Psoas muscle (tissue), 8 donors: ENCODE measurements at regions of chr1 and their contacts with region 1.

Region 1: DNA sequence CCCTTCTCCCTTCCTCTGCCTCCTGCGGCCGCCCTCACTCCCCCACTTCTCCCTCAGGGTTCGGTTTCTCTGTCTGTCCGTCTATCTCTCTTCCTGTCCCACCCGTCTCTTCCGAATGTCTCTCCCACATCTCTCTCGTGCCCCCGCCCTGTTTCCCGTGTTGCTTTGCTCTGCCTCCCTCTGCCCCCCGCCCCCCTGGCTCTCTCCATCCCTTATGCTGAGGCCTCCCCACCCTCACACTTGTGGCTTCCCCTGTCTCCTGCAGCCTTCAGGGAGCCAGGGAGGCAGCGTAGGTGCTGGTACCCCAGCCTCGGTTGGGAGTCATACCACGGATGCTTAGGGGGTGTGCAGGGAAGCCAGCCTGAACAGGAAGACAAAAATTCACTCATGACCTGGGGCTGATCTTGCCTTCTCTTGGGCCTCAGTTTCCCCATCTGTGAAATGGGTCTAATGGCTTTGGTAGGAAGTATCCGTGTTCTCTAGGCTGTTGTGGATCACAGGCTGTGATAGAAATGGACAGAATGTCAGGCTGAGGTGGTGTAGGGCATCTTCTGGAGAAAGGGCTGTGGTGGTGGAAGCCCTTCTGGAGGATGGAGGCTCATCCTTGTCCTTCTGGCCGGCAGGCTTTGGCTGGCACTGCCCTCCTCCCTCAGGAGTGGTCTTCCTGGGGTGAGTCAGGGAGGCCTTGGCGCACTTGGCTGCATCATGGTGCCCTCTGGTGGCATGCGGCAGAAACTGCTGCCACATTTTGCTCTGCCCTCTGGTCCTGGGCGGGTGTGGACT is 55.5 kb downstream of the FOXO6 start:
- DNase-seq: peak; percentile 65 to 86
- ATAC-seq: peak; percentile 51 to 70 (median 58)
- H3K4me3 ChIP-seq: no peak overlapping the region
- H3K27ac ChIP-seq: no peak overlapping the region
- H3K4me1 ChIP-seq: peaks cover 36% of the 10 kb centered on the region
- H3K27me3 ChIP-seq: no peaks in the 10 kb centered on the region
- CTCF ChIP-seq: peak; percentile 94

Region 2: GRCh38 chr1:41268154-41268770 is 148.5 kb before region 1 on chr1:
- intact Hi-C with region 1: loop called (anchors 5 kb)
- DNase-seq: peak; percentile 75 to 85
- ATAC-seq: peak; percentile 90 to 96 (median 94)
- H3K4me3 ChIP-seq: no peak overlapping the region
- H3K27ac ChIP-seq: no peak overlapping the region
- H3K4me1 ChIP-seq: peaks cover 3% of the 10 kb centered on the region
- H3K27me3 ChIP-seq: no peaks in the 10 kb centered on the region
- CTCF ChIP-seq: peak; percentile 99

Region 3: GRCh38 chr1:41282679-41283317 is 133.9 kb before region 1 on chr1:
- intact Hi-C with region 1: loop called in 1 of 2 experiments (anchors 5 kb)
- DNase-seq: peak; percentile 24 to 65
- ATAC-seq: peak; percentile 69 to 85 (median 82)
- H3K4me3 ChIP-seq: no peak overlapping the region
- H3K27ac ChIP-seq: no peak overlapping the region
- H3K4me1 ChIP-seq: no peaks in the 10 kb centered on the region
- H3K27me3 ChIP-seq: no peaks in the 10 kb centered on the region
- CTCF ChIP-seq: peak; percentile 73

Region 4: DNA sequence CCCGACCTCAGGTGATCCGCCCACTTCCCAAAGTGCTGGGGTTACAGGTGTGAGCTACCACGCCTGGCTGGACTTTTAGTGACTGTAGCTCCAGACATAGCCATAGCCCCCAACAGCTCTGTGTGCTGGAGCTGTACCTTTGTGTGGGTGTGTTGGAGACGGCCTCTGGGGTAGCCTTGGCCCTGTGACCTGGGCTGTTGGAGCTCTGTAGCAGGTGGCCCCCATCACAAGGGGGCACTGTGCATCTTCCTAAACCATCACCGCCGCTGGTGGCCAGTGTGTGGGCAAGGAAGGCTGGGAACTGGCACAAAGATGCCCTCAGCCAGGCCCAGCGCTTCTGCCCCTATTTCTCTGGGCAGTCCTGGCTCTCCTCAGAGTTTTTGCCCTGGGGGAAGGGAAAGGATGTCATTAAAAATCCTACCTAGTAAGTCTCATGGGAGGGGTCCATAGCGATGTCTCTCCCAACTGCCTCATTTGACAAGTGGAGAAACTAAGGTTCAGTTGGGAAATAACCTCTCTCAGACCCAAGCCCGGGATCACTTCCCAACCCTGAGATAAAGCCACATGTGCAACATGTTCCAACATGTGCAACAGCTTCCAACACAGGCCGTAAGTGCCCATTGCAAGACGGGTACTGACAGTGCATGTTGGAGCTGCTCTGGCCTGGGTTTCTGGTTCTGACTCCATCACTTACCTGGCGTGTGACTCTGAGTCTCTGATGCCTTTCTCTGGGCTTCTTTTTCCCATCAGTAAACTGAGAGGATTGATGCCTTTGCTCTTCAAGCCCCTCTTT is 93.7 kb before region 1 on chr1:
- intact Hi-C with region 1: loop called (anchors 1 to 2 kb)
- DNase-seq: peak; percentile 60 to 83
- ATAC-seq: peak; percentile 86 to 94 (median 90)
- H3K4me3 ChIP-seq: no peak overlapping the region
- H3K27ac ChIP-seq: no peak overlapping the region
- H3K4me1 ChIP-seq: peaks cover 24% of the 10 kb centered on the region
- H3K27me3 ChIP-seq: no peaks in the 10 kb centered on the region
- CTCF ChIP-seq: peak; percentile 63

Region 5: DNA sequence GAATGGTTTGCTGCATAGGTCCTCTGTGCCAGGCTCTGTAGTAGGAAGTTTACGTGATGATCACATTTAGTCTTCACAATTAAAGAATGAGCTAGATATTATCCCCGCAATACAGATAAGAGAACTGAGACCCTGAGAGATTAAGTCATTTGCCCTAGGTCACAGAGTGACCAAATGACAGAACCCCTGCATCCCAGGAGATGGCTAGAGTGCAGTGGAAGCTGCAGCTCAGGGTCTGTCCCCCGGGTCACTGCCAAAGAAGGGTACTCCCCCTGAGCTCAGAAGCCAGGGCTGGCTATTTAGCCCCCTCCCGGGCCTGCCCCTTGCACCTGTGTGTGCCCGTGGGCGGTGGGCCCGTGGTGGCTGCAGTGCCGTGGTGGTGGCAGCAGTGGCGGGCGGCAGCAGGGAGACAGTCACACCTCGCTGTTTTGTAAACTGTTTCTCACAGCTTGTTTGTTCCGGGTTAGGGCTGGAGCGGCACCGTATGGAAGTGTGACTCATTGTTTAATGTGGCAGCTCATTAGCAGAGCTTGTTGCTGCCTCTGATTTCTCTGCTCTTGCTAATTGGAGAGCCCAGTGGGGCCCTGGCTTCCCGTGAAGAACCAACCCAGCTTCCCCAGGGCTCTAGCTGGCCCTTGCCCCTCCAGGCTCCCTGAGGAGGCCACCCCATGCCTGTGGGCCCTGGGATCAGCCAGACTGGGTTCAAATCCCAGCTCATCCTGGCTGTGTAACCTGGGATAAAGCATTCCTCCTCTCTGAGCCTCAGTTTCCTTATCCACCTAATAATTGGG is 74.8 kb before region 1 on chr1:
- intact Hi-C with region 1: loop called in 1 of 2 experiments (anchors 5 kb)
- DNase-seq: no peak
- ATAC-seq: peak; percentile 36 to 82 (median 75)
- H3K4me3 ChIP-seq: peak overlapping the region; percentile 20
- H3K27ac ChIP-seq: peak overlapping the region; percentile 90
- H3K4me1 ChIP-seq: peaks cover 44% of the 10 kb centered on the region
- H3K27me3 ChIP-seq: no peaks in the 10 kb centered on the region
- CTCF ChIP-seq: no peak

Region 6: GRCh38 chr1:41360993-41361753 is 55.6 kb before region 1 on chr1 and contains the start of gene FOXO6:
- intact Hi-C with region 1: loop called (anchors 1 to 2 kb)
- DNase-seq: peak; percentile 99
- ATAC-seq: peak; percentile 85 to 92 (median 89)
- H3K4me3 ChIP-seq: peak within 1 kb of the TSS; percentile 87
- H3K27ac ChIP-seq: peak within 1 kb of the TSS; percentile 58
- H3K4me1 ChIP-seq: peaks cover 49% of the 10 kb centered on the region
- H3K27me3 ChIP-seq: no peaks in the 10 kb centered on the region
- CTCF ChIP-seq: peak; percentile 66
- total RNA-seq, gene FOXO6: 0.84 to 8.6 (median 3.3) TPM

Region 7: DNA sequence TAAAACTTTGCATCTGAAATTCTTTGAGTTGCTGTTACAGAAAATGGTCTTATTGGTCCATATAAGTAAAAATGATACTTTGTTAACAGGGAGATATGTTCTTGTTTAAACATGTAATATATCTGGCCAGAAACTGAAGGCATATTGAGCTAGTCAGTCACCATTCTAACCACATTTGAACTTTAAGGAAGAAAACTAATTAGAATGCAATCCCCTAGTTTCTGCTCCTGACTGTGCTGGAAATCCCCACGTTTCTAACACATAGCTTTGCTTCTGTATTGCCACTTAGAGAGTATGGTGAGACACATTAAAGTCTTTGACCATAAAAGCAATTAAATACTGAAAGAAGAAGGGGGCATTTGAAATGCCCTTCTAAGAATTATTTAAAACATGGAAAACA is 534.1 kb after region 1 on chr1:
- intact Hi-C with region 1: no loop called
- DNase-seq: no peak
- ATAC-seq: no peak
- H3K4me3 ChIP-seq: no peak overlapping the region
- H3K27ac ChIP-seq: no peak overlapping the region
- H3K4me1 ChIP-seq: peaks cover 4% of the 10 kb centered on the region
- H3K27me3 ChIP-seq: no peaks in the 10 kb centered on the region
- CTCF ChIP-seq: no peak